ENCODE measurements at regions of chr6 and their contacts with region 1.

Region 1: DNA sequence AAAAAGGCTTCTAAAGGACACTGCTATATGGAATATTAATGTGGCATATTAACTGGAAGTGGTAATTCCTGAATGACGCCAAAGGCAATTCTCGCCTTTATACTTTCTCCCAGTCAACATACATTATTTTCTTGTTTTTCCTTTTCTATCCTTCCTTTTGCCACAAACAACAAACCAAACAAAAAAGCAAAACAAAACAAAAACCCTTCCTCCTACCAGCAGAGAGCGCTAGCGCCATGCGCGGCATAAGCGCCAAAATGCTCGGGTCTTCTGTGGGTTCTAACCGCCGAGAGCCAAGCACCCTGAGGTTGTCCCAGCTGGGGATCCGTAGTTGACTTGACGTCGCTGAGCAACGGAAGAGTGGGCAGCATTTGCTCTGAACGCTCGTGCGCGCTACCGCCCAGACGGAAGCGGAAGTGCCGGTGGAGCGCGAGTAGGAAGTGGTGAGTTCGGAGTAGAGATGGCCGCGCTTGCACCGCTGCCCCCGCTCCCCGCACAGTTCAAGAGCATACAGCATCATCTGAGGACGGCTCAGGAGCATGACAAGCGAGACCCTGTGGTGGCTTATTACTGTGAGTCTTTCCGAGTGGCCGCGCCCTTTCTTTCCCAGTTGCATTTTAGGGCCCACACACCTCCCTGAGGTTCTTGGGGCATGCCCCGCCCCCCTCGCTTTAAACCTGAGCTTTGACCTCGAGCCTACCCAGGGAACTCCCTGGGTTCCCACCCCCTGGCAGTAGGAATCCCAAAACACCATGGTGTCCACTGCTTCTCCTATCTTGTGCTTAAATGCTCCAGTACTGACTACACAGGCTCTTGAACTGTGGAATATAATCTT is at the starts of genes NMBR and VTA1:
- DNase-seq: peak; percentile 90
- ATAC-seq: peak; percentile 96
- H3K4me3 Mint-ChIP-seq: peak within 1 kb of the TSS; percentile 96
- H3K27ac Mint-ChIP-seq: peak within 1 kb of the TSS; percentile 78
- H3K4me1 Mint-ChIP-seq: peaks cover 54% of the 10 kb centered on the region
- H3K27me3 Mint-ChIP-seq: no peaks in the 10 kb centered on the region
- CTCF ChIP-seq: peak; percentile 16
- total RNA-seq, gene NMBR: not detected in 2 replicates
- total RNA-seq, gene VTA1: 30.3 and 30.4 TPM in 2 replicates

Region 2: GRCh38 chr6:142207265-142207877 is 60.3 kb after region 1 on chr6:
- CTCF ChIA-PET with region 1: interaction called, 5 read pairs
- POLR2A ChIA-PET with region 1: no interaction called
- intact Hi-C with region 1: loop called (anchors 1 kb)
- DNase-seq: no peak
- ATAC-seq: peak; percentile 34
- H3K4me3 Mint-ChIP-seq: no peak overlapping the region
- H3K27ac Mint-ChIP-seq: no peak overlapping the region
- H3K4me1 Mint-ChIP-seq: no peaks in the 10 kb centered on the region
- H3K27me3 Mint-ChIP-seq: no peaks in the 10 kb centered on the region
- CTCF ChIP-seq: no peak

Region 3: DNA sequence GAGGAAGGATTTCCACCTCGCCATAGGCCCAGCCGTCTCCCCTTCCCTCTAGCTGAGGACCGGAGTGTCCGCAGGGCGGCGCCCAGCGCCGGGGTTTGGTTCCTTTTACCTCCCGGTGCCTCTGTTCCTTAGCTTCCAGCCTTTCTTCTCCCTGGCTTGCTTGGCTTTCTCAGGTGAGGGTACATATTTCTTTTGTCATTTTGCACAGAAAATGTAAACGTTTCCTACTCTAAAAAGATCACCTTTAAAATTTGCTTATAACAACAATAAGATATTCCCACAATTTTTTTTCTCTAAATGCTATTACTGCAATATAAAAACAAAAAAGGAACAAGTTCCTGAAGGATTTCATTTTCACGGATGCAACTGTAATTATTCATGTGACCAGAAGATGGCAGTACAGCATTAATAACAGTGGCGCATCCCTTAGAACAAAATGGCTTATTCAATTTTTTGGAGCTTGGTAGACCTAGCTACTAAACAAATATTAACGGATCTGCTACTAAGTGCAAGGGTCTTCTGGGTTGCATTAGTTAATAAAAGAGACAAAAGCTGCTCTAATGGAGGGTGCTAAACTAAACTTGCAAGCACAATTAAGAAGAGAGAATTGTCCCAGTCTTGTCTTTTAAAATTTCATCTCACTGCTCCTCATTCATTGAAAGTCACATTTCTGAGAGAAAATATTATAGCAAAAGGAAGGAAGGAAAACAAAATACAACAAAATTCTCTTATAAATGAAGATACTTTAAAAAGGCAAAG is 327.7 kb after region 1 on chr6:
- CTCF ChIA-PET with region 1: no interaction called
- POLR2A ChIA-PET with region 1: interaction called, 3 read pairs
- intact Hi-C with region 1: loop called (anchors 5 kb)
- DNase-seq: no peak
- ATAC-seq: peak; percentile 54
- H3K4me3 Mint-ChIP-seq: no peak overlapping the region
- H3K27ac Mint-ChIP-seq: no peak overlapping the region
- H3K4me1 Mint-ChIP-seq: no peaks in the 10 kb centered on the region
- H3K27me3 Mint-ChIP-seq: peaks cover 3% of the 10 kb centered on the region
- CTCF ChIP-seq: peak; percentile 81

Region 4: GRCh38 chr6:143060354-143060805 is 913.3 kb after region 1 on chr6:
- CTCF ChIA-PET with region 1: no interaction called
- POLR2A ChIA-PET with region 1: no interaction called
- intact Hi-C with region 1: loop called (anchors 1 kb)
- DNase-seq: peak; percentile 74
- ATAC-seq: peak; percentile 63
- H3K4me3 Mint-ChIP-seq: peak overlapping the region; percentile 93
- H3K27ac Mint-ChIP-seq: peak overlapping the region; percentile 86
- H3K4me1 Mint-ChIP-seq: peaks cover 20% of the 10 kb centered on the region
- H3K27me3 Mint-ChIP-seq: no peaks in the 10 kb centered on the region
- CTCF ChIP-seq: no peak

Region 5: GRCh38 chr6:143510991-143511891 is 1364.2 kb after region 1 on chr6 and contains the start of gene FUCA2:
- CTCF ChIA-PET with region 1: no interaction called
- POLR2A ChIA-PET with region 1: no interaction called
- intact Hi-C with region 1: loop called (anchors 5 kb)
- DNase-seq: peak; percentile 47
- ATAC-seq: peak; percentile 69
- H3K4me3 Mint-ChIP-seq: peak within 1 kb of the TSS; percentile 90
- H3K27ac Mint-ChIP-seq: peak within 1 kb of the TSS; percentile 74
- H3K4me1 Mint-ChIP-seq: peaks cover 28% of the 10 kb centered on the region
- H3K27me3 Mint-ChIP-seq: no peaks in the 10 kb centered on the region
- CTCF ChIP-seq: no peak
- total RNA-seq, gene FUCA2: 8.7 and 9.9 TPM in 2 replicates